HEK293T (cell line): ENCODE measurements at regions of chr5 and their contacts with region 1.

Region 1: GRCh38 chr5:139787568-139788293 is 7.9 kb upstream of the PSD2 start:
- DNase-seq: peak; percentile 95

Region 2: DNA sequence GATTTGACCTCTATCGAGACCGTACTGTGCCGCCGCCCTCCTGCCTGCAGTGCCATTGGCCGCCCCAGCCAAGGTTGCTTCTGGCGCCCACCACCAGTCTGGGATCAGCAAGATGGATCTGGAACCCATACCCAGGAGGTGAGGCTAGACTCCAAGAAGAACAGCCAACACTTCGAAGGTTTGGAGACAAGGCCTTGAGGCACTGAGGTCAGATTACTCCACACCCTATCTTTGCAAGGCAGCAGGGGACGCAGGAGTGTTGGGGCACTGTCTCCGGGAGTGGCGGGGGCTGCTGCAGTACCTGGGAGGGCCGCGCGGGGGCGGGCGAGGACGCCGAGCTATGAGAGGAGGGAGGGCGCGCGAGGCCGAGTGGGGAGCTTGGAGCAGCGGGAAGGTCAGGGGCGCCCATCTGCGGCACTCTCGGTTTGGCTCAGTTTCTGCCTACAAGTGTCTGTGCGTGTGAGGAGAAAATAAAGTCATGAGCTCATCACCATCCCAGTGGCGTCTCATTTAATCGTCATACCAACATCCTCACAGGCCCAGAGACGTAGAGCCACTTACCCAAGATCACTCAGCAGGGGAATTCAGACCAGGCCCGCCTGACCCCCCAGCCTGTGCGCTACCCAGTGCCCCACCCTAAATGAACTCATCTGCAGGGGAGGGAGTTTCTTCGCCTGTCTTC is 12.6 kb before region 1 on chr5:
- CTCF ChIA-PET with region 1: interaction called, 23 read pairs
- POLR2A ChIA-PET with region 1: no interaction called
- DNase-seq: peak; percentile 87

Region 3: DNA sequence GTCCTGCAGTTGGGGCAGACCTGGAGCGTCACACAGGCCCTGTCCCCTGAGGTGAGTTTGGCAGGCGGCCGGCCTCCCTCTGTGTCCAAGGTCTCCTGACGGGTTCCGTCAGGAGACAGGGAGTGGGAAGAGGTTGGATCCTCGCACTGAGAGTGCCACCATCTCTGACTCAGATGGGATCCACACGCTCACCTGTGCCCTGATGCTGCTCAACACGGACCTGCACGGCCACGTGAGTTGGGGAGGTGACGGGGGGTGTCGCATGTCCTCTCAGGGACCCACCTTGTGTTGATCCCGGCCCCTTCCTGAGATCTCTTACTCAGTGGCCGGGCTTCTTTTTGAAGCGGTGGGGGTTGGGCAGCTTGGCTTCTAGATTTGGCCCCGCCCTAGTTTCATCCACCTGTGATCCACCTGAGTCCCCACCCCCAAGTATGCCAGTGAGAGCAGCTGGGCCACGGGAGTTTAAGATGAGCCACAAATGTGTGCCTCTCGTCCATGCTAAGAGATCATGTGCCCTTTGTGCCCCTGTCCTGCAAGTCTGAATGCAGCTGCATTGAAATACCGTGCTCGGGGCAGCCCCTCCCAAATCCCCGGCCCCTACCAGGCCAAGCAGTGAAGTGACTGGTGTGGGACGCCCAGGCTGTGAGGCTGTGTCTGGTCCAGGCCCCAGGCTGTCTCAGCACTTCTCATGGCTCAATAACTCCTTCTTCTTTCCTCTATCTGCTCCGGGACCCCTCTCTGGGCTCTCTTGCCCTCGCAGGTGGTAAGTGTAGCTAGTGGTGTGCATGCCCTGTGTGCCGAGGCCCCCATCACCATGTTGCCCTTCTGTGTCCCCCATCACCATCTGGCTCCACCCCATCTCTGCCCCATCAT is 35.1 kb after region 1 on chr5:
- CTCF ChIA-PET with region 1: no interaction called
- POLR2A ChIA-PET with region 1: no interaction called
- DNase-seq: no peak

Region 4: GRCh38 chr5:139844472-139845145 is 56.9 kb after region 1 on chr5:
- CTCF ChIA-PET with region 1: interaction called, 13 read pairs
- POLR2A ChIA-PET with region 1: no interaction called
- DNase-seq: peak; percentile 83

Region 5: DNA sequence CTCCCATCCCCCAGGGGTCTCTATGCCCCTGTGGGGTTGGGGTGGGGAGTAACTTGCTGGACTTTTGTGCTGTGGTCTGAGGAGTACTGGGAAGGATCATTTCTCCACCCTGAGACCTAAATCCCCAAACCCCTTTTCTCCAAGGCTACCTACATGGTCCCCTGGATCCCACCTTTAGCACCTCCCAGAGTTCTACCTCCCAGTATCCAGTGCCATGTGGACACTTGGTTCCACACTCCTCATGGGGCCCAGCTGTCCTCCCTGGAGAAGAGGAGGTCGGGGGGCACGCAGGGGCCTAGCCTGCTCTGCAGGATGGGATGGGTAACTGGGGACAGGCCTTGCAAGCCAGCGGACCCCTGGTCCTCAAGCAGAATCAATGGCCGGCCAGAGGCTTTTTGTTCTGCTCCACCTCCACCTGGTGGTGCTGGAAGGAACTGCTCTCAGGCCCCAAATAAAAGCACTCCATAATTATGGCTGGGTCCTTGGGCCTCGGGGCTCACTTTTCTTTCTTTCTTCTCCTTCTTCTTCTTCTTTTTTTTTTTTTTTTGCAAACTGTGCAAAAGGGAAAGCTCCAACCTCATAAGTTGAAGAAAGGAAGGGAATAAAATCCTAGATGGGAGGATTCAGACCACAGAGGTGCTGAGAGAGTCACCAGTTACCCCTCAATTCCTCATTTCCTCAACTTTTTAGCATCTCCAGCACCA is 76.3 kb after region 1 on chr5:
- CTCF ChIA-PET with region 1: interaction called, 16 read pairs
- POLR2A ChIA-PET with region 1: no interaction called
- DNase-seq: peak; percentile 82